Head of caudate nucleus (tissue), 42 donors: ENCODE measurements at regions of chr3 and their contacts with region 1.

Region 1: GRCh38 chr3:139187650-139188049 is 143.0 kb upstream of the PRR23C start:
- DNase-seq: peak in 4 of 42 donors; percentile 12 to 49 (median 33)

Region 2: GRCh38 chr3:139111392-139112229 is 76.0 kb before region 1 on chr3:
- intact Hi-C with region 1: loop called (anchors 10 kb)
- DNase-seq: peak; percentile 37 to 92 (median 76)

Region 3: GRCh38 chr3:139134678-139135372 is 52.8 kb before region 1 on chr3:
- intact Hi-C with region 1: no loop called
- DNase-seq: no peak